Breast epithelium (tissue), 4 donors: ENCODE measurements at regions of chr5 and their contacts with region 1.

Region 1: DNA sequence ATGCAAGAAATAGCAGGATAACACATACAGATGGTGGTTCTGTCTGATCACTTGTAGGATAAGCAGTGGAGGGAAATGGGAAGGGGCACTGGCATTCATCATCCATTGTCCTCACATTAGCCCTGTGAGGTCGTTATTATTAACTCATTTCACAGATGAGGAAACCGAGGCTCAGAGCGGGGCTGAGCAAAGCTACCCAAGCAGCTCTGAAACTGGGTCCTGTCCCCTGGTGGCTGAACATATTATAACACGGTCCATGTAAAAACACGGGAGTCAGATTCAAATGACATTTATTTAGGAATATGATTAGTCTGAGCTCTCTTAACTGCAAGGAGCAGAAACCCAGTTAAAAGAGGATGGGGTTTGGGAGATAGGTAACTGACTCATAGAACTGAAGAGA is 43.1 kb downstream of the HRH2 start:
- DNase-seq: no peak
- H3K4me3 ChIP-seq: no peak overlapping the region
- H3K27ac ChIP-seq: no peak overlapping the region
- H3K4me1 ChIP-seq: no peaks in the 10 kb centered on the region
- H3K27me3 ChIP-seq: no peaks in the 10 kb centered on the region
- CTCF ChIP-seq: peak in 1 of 3 donors; percentile 10
- POLR2A ChIP-seq: no peak

Region 2: DNA sequence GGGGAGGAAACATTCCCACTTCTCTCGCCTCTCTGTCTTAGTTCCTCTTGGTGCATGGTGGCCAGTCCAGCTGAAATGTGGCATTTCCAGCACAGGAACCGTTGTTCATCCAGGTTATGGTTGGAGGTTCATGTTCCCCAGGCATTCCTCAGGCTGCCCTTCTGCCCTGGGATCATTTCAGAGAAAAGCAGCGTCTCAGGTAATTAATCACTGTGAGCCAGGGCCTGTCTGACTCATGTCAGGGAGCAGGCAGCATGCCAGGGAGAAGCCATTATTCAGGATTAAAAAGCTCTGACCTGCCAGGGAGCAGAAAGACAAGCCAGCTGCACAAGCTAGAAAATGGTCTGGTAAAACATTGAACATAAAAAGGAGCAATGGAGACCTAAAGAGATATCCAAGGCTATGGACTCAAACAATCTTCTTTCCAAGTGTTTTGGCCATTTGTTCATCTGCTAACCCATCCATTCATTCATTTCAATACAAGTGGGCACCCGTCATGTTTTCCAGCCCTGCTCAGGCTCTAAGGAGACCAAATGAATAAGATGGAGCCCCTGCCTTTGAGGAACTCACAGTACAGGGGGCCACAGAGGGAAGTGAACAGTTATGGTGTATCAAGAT is 498.4 kb before region 1 on chr5:
- intact Hi-C with region 1: loop called (anchors 5 kb)
- DNase-seq: no peak
- H3K4me3 ChIP-seq: no peak overlapping the region
- H3K27ac ChIP-seq: no peak overlapping the region
- H3K4me1 ChIP-seq: no peaks in the 10 kb centered on the region
- H3K27me3 ChIP-seq: peaks cover 0 to 4% of the 10 kb centered on the region in 2 donors
- CTCF ChIP-seq: no peak
- POLR2A ChIP-seq: no peak